Endothelial cell of umbilical vein (primary cell): ENCODE measurements at regions of chr10 and their contacts with region 1.

Region 1: GRCh38 chr10:52951824-52952223 is 179.2 kb upstream of the MBL2 start:
- DNase-seq: peak; percentile 73
- H3K4me3 ChIP-seq: no peak overlapping the region
- H3K27ac ChIP-seq: no peak overlapping the region
- H3K4me1 ChIP-seq: no peaks in the 10 kb centered on the region
- H3K27me3 ChIP-seq: no peaks in the 10 kb centered on the region
- CTCF ChIP-seq: peak; percentile 55 to 71
- POLR2A ChIP-seq: no peak

Region 2: GRCh38 chr10:52703898-52704297 is 247.9 kb before region 1 on chr10:
- CTCF ChIA-PET with region 1: no interaction called
- POLR2A ChIA-PET with region 1: no interaction called
- dilution Hi-C with region 1: no loop called
- intact Hi-C with region 1: no loop called
- DNase-seq: peak; percentile 74
- H3K4me3 ChIP-seq: no peak overlapping the region
- H3K27ac ChIP-seq: peak overlapping the region; percentile 52
- H3K4me1 ChIP-seq: peaks cover 14% of the 10 kb centered on the region
- H3K27me3 ChIP-seq: no peaks in the 10 kb centered on the region
- CTCF ChIP-seq: no peak
- POLR2A ChIP-seq: no peak

Region 3: DNA sequence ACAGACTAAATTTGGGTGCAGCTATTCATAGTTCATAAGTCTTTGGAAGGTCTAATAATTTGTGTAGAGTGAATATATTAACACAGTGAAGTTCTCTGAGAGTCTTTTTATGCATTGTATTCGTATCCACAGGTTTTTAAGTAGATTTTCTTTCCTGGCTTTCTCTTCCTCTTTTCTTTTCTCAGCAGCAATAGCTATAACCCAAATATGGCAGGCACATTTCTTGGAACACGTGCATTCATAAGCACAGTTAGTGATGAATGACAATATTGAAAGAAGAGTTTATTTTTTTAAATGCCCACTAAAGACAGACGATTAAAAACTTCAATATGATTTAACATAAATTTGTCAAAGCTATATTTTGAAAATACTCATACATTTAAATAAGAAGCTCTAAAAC is 41.3 kb after region 1 on chr10:
- CTCF ChIA-PET with region 1: no interaction called
- POLR2A ChIA-PET with region 1: no interaction called
- dilution Hi-C with region 1: no loop called
- intact Hi-C with region 1: no loop called
- DNase-seq: no peak
- H3K4me3 ChIP-seq: no peak overlapping the region
- H3K27ac ChIP-seq: no peak overlapping the region
- H3K4me1 ChIP-seq: no peaks in the 10 kb centered on the region
- H3K27me3 ChIP-seq: no peaks in the 10 kb centered on the region
- CTCF ChIP-seq: no peak
- POLR2A ChIP-seq: no peak

Region 4: DNA sequence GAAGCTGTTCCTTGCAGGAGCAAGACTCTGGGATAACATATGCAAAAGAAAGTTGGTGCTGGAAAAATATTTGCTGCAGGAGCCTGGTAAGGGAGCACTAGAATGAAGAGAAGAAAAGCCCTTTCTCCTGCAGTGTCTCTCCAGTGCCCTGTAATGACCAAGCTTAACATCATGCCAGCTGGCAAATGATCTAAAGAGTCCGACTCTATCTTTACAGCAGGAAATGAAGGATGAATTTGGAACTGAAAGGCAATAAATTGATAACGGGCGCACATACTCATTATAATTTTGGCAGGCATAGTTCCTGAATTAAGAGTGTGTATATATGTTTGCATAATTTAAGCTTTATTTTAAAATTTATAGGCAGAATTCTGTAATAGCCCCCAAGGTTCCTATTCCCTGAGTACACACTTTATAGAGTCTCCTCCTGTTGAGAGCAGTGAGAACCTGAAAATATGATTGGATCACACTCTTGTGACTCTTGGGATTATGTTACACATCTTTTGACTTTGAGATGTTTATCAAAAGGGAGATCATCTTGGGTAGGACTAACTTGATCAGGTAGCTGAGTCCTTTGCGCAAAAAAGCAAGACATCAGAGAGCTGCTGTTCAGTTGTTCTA is 119.8 kb after region 1 on chr10:
- CTCF ChIA-PET with region 1: no interaction called
- POLR2A ChIA-PET with region 1: no interaction called
- dilution Hi-C with region 1: no loop called
- intact Hi-C with region 1: loop called (anchors 5 kb)
- DNase-seq: no peak
- H3K4me3 ChIP-seq: no peak overlapping the region
- H3K27ac ChIP-seq: no peak overlapping the region
- H3K4me1 ChIP-seq: peaks cover 4% of the 10 kb centered on the region
- H3K27me3 ChIP-seq: peaks cover 3 to 8% of the 10 kb centered on the region in 2 experiments
- CTCF ChIP-seq: no peak
- POLR2A ChIP-seq: no peak

Region 5: DNA sequence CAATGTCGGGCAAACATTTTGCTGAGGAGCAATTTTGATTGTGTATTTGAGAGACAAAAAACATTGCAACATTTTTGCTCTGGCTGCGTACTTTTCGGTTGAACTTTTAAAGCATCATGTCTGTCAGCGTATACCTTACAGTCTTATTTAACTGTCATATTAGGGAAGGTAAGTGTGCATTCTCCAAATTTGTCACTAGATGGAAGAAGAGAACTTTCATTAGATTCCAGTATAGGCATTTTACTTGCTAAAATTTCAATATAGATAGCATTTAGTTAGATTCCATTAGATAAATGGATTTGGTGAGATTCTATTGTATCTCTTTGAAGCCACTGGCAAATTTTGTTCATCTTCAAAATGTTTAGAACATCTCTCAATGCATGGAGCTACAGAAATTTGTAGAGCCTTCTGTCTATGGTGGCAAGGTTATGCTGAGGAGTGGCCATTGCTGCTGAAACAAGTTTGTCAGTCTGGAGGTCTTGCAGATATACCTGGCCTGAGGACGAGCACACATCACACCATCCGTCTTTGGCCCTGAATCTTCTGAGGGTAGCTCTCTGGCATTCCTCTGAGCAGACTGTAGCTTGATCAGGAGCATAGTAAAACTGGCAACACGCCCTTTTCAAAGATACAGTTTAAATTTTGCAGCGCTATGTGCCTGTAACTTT is 258.3 kb after region 1 on chr10:
- CTCF ChIA-PET with region 1: interaction called, 8 read pairs
- POLR2A ChIA-PET with region 1: no interaction called
- dilution Hi-C with region 1: no loop called
- intact Hi-C with region 1: loop called (anchors 1 kb)
- DNase-seq: peak; percentile 51
- H3K4me3 ChIP-seq: no peak overlapping the region
- H3K27ac ChIP-seq: no peak overlapping the region
- H3K4me1 ChIP-seq: no peaks in the 10 kb centered on the region
- H3K27me3 ChIP-seq: no peaks in the 10 kb centered on the region
- CTCF ChIP-seq: peak; percentile 13 to 14
- POLR2A ChIP-seq: no peak